Motor neuron (in vitro differentiated cells): ENCODE measurements at regions of chr11 and their contacts with region 1.

Region 1: DNA sequence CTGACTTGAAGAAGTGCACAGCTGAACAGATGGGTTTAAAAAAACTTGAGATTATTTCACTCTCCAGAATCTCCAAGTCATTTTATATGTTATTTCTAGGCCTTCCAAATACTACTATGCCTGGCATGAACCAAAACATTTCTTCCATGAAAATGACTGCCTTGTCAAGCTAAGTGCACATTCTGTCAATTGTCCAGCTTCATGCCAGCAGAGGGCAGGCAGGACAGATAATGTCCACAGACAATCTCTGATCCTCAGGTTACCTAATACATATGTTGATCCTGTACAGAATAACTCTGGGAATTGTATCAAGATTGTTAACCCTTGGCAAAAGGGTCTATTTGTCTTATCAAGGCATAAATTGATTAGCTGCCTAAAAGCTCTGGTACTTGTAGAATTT is 229.5 kb downstream of the AASDHPPT start:
- ATAC-seq: peak in 3 of 8 experiments; percentile 33 to 56 (median 40)
- H3K4me3 ChIP-seq: no peak overlapping the region
- H3K27ac ChIP-seq: no peak overlapping the region
- H3K4me1 ChIP-seq: peaks cover 1 to 2% of the 10 kb centered on the region in 2 donors

Region 2: GRCh38 chr11:106585061-106585460 is 278.1 kb after region 1 on chr11:
- in situ Hi-C with region 1: loop called in 1 of 9 experiments (anchors 25 kb)
- ATAC-seq: peak in 3 of 8 experiments; percentile 64 to 87 (median 81)
- H3K4me3 ChIP-seq: no peak overlapping the region
- H3K27ac ChIP-seq: no peak overlapping the region
- H3K4me1 ChIP-seq: no peaks in the 10 kb centered on the region